Ascending aorta (tissue), 2 donors: ENCODE measurements at regions of chr15 and their contacts with region 1.

Region 1: GRCh38 chr15:89243691-89244471 is at the start of gene FANCI:
- DNase-seq: peak; percentile 83 to 97
- H3K4me3 ChIP-seq: peak within 1 kb of the TSS; percentile 77 to 83
- H3K27ac ChIP-seq: peak within 1 kb of the TSS; percentile 24
- H3K4me1 ChIP-seq: peaks cover 5 to 10% of the 10 kb centered on the region in 2 donors
- H3K27me3 ChIP-seq: no peaks in the 10 kb centered on the region
- CTCF ChIP-seq: peak; percentile 35 to 66 (median 35)
- total RNA-seq, gene FANCI: not detected

Region 2: GRCh38 chr15:88897456-88898194 is 346.3 kb before region 1 on chr15:
- intact Hi-C with region 1: loop called (anchors 2 kb)
- DNase-seq: peak; percentile 68 to 94
- H3K4me3 ChIP-seq: peak overlapping the region in 1 of 2 donors; percentile 28
- H3K27ac ChIP-seq: peak overlapping the region; percentile 81 to 83
- H3K4me1 ChIP-seq: peaks cover 3 to 68% of the 10 kb centered on the region in 2 donors
- H3K27me3 ChIP-seq: no peaks in the 10 kb centered on the region
- CTCF ChIP-seq: peak; percentile 70 to 80 (median 71)

Region 3: GRCh38 chr15:89017370-89018066 is 226.4 kb before region 1 on chr15:
- intact Hi-C with region 1: loop called (anchors 5 kb)
- DNase-seq: peak; percentile 55 to 96
- H3K4me3 ChIP-seq: peak overlapping the region; percentile 36 to 40
- H3K27ac ChIP-seq: peak overlapping the region; percentile 95 to 96
- H3K4me1 ChIP-seq: peaks cover 22 to 51% of the 10 kb centered on the region in 2 donors
- H3K27me3 ChIP-seq: no peaks in the 10 kb centered on the region
- CTCF ChIP-seq: peak; percentile 76 to 82 (median 79)

Region 4: DNA sequence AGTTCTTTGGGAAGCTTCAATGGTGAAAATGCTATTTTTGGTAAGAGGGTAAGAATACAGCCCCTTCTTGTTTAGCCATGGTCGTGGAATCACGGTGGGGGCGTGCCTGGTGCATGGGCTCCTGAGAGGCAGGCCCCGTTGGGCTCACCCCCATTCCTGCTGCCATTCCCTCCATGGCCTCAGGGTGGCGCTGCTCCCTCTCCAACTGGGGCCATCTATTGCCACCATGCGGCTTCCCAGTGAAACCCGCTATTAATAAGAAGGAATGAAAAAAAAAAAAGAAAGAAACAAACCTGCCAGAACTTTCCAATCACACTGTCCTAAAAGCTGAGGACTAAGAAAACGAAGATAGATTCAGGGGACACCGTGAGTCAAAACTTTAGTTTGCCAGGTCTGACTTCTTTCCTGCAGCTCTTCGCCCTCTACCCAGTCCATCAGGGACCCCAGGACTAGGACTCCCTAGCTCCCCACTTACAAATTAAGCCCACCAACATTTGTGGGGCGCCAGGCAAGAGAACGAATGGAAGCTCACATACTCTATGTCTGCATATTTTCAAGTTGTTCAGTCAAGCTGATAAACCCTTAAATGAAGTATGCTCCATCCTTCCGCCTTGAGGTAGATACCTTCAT is 186.3 kb before region 1 on chr15:
- intact Hi-C with region 1: loop called (anchors 5 kb)
- DNase-seq: peak; percentile 34 to 92
- H3K4me3 ChIP-seq: no peak overlapping the region
- H3K27ac ChIP-seq: peak overlapping the region in 1 of 2 donors; percentile 50
- H3K4me1 ChIP-seq: peaks cover 0 to 21% of the 10 kb centered on the region in 2 donors
- H3K27me3 ChIP-seq: no peaks in the 10 kb centered on the region
- CTCF ChIP-seq: peak; percentile 97 to 98 (median 98)

Region 5: DNA sequence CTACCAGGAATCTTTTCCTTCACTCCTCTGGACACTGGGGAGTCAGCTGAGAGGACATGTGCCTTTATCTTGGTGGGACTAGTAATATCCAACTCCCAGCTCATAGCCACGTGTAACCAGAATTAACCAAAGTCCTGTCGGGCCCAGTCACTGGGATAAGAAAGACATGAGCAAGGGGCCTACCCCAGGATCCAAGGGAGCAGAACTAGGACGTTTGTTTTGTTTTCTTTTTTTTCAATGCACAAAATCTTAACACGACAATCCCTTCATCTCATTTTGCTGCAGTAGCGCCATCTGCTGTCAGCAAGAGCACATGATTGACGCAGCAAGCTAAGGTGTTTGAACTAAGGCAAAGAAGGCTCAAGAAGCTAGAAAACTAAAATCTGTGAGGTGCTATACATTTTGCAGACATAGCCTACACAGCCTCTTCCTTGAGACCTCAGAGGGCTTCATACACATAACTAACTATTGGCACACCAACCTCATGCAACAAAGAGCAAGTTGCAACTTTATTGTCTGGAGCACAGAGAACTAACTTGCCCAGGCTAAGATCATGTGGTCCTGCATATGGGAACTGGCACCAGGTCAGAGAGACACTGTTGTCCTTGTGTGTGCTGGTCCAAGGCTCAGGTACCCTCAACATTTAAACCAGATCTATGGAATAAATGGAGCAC is 66.1 kb before region 1 on chr15:
- intact Hi-C with region 1: no loop called
- DNase-seq: peak in 1 of 2 donors; percentile 81
- H3K4me3 ChIP-seq: no peak overlapping the region
- H3K27ac ChIP-seq: peak overlapping the region in 1 of 2 donors; percentile 2
- H3K4me1 ChIP-seq: peaks cover 0 to 17% of the 10 kb centered on the region in 2 donors
- H3K27me3 ChIP-seq: no peaks in the 10 kb centered on the region
- CTCF ChIP-seq: peak; percentile 76 to 88 (median 77)

Region 6: GRCh38 chr15:89206908-89207331 is 37.0 kb before region 1 on chr15:
- intact Hi-C with region 1: loop called (anchors 2 kb)
- DNase-seq: peak in 1 of 2 donors; percentile 84
- H3K4me3 ChIP-seq: peak overlapping the region in 1 of 2 donors; percentile 47
- H3K27ac ChIP-seq: no peak overlapping the region
- H3K4me1 ChIP-seq: peaks cover 0 to 3% of the 10 kb centered on the region in 2 donors
- H3K27me3 ChIP-seq: no peaks in the 10 kb centered on the region
- CTCF ChIP-seq: peak; percentile 81 to 99 (median 98)

Region 7: DNA sequence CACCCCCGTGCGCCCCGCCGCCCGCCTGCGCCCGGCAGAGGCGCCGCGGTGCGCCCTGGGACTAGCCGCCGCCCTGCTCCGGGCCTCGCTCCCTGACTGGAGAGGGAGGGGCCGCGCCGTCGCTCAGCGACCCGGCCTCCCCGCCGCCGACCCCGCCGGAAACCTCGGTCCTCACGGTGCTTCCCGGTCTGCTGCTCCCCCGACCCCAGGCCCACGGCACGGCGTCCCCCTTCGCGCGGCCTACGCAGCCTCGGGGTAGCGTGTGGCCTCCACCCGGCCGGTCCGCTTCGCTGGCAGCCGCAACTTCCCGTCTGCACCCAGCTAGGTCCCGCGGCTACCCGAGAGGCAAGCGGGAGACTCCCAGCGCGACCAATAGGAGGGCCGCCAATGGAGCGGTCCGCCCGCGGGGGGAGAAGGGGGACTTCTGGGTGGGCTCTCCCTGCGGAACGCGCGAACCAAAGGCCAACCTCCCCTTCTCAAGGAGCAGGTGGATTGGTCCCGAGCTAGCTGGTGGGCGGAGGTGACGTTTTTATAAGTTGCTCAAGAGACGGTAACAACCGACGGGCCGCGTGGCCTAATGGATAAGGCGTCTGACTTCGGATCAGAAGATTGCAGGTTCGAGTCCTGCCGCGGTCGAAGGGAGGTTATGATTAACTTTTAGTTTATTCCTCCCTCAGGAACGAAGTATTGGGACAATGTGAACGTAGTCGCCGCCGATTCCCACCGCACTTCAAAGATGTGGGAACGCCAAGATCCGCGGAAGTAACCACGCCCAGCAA is 90.8 kb after region 1 on chr15 and contains the start of gene POLG:
- intact Hi-C with region 1: loop called (anchors 2 kb)
- DNase-seq: peak; percentile 96 to 99
- H3K4me3 ChIP-seq: peak within 1 kb of the TSS; percentile 76 to 96
- H3K27ac ChIP-seq: peak within 1 kb of the TSS; percentile 88 to 93
- H3K4me1 ChIP-seq: peaks cover 14 to 38% of the 10 kb centered on the region in 2 donors
- H3K27me3 ChIP-seq: no peaks in the 10 kb centered on the region
- CTCF ChIP-seq: no peak
- total RNA-seq, gene POLG: 69.1 TPM